CD4-positive, alpha-beta memory T cell (primary cell): ENCODE measurements at regions of chr3 and their contacts with region 1.

Region 1: GRCh38 chr3:120417272-120417911 is 33.4 kb downstream of the FSTL1 start:
- DNase-seq: peak; percentile 78 to 83 (median 80)
- H3K4me3 ChIP-seq: peak overlapping the region; percentile 43 to 59
- H3K4me3 Mint-ChIP-seq: peak overlapping the region; percentile 82 to 94 (median 87)
- H3K27ac ChIP-seq: no peak overlapping the region
- H3K27ac Mint-ChIP-seq: peak overlapping the region in 5 of 7 donors; percentile 23 to 86 (median 81)
- H3K4me1 ChIP-seq: peaks cover 10% of the 10 kb centered on the region
- H3K4me1 Mint-ChIP-seq: peaks cover 11 to 25% (median 12%) of the 10 kb centered on the region in 4 donors
- H3K27me3 ChIP-seq: no peaks in the 10 kb centered on the region
- H3K27me3 Mint-ChIP-seq: peaks cover 0 to 7% of the 10 kb centered on the region in 2 donors

Region 2: GRCh38 chr3:119891944-119892721 is 525.3 kb before region 1 on chr3:
- CTCF ChIA-PET with region 1: interaction called, 45 read pairs
- POLR2A ChIA-PET with region 1: no interaction called
- intact Hi-C with region 1: loop called (anchors 1 kb)
- DNase-seq: peak in 4 of 5 donors; percentile 55 to 62 (median 58)
- H3K4me3 ChIP-seq: no peak overlapping the region
- H3K4me3 Mint-ChIP-seq: no peak overlapping the region
- H3K27ac ChIP-seq: no peak overlapping the region
- H3K27ac Mint-ChIP-seq: peak overlapping the region in 2 of 7 donors; percentile 5 to 32
- H3K4me1 ChIP-seq: no peaks in the 10 kb centered on the region
- H3K4me1 Mint-ChIP-seq: peaks cover 11 to 17% (median 15%) of the 10 kb centered on the region in 4 donors
- H3K27me3 ChIP-seq: no peaks in the 10 kb centered on the region
- H3K27me3 Mint-ChIP-seq: no peaks in the 10 kb centered on the region

Region 3: GRCh38 chr3:120072867-120073525 is 344.4 kb before region 1 on chr3:
- CTCF ChIA-PET with region 1: no interaction called
- POLR2A ChIA-PET with region 1: no interaction called
- intact Hi-C with region 1: no loop called
- DNase-seq: no peak
- H3K4me3 ChIP-seq: no peak overlapping the region
- H3K4me3 Mint-ChIP-seq: no peak overlapping the region
- H3K27ac ChIP-seq: no peak overlapping the region
- H3K27ac Mint-ChIP-seq: peak overlapping the region in 1 of 7 donors; percentile 74
- H3K4me1 ChIP-seq: peaks cover 28% of the 10 kb centered on the region
- H3K4me1 Mint-ChIP-seq: peaks cover 45 to 78% (median 62%) of the 10 kb centered on the region in 4 donors
- H3K27me3 ChIP-seq: no peaks in the 10 kb centered on the region
- H3K27me3 Mint-ChIP-seq: no peaks in the 10 kb centered on the region

Region 4: DNA sequence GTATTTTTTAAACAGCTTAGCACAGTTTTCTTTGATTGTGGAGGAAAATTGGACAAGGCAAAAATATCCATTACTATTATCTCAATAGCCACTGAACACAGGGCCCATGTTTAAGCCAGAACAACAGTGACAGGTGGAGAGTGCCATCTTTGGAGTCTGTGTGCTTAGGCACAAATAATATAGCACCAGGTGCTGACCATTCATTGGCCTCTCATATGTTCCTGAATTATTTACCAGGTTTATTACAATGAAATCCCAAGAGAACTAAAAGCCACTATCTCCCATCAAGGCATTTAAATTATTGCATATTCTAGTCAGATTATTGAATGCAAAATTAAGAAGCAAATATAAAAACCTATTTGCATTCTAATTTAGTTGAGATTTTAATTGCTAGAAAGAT is 172.0 kb before region 1 on chr3:
- CTCF ChIA-PET with region 1: interaction called, 169 read pairs
- POLR2A ChIA-PET with region 1: interaction called, 4 read pairs
- intact Hi-C with region 1: loop called (anchors 1 kb)
- DNase-seq: no peak
- H3K4me3 ChIP-seq: no peak overlapping the region
- H3K4me3 Mint-ChIP-seq: no peak overlapping the region
- H3K27ac ChIP-seq: no peak overlapping the region
- H3K27ac Mint-ChIP-seq: no peak overlapping the region
- H3K4me1 ChIP-seq: no peaks in the 10 kb centered on the region
- H3K4me1 Mint-ChIP-seq: no peaks in the 10 kb centered on the region
- H3K27me3 ChIP-seq: peaks cover 4% of the 10 kb centered on the region
- H3K27me3 Mint-ChIP-seq: peaks cover 11 to 17% of the 10 kb centered on the region in 2 donors

Region 5: DNA sequence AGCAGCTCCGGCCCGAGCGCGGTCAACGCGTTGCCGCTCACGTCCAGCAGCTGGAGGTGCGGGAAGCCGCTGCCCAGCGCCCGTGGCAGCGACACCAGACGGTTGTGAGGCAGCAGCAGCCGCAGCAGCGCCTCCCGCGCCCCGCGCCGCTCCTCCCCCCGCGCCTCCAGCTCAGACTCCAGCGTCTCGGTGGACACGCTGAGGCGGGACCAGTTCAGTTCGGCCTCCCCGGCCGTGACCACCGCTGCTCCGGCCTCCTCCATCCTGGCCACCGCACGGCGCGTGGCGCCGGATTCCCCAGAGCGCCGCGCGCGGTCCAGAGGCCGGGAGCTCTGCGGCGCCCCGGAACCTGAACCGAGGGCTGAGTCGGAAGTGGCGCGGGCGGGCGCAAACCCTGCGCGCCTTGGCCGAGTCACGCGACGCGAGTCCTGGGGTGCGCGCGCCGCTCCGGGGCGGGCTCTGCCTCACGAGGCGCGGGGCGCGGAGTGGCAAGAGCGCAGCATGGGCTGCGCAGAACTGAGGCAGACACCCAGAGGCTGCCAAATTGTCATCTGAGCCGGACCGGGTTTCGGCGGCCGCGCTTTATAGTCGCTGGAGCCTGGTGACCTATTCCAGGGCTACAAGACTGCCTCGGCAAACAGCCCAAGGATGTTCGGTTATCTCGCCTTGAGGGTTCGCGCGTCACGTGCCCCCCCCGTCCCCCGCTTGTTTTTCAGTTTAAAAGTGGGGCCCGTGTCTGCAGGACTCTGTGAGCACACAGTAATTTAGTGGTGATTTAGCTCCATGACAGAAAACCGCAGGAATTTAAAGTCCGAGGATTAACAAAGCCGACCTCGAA is 68.2 kb before region 1 on chr3 and contains the start of gene LRRC58:
- CTCF ChIA-PET with region 1: interaction called, 21 read pairs
- POLR2A ChIA-PET with region 1: interaction called, 13 read pairs
- intact Hi-C with region 1: loop called (anchors 2 kb)
- DNase-seq: peak; percentile 86 to 93 (median 93)
- H3K4me3 ChIP-seq: peak within 1 kb of the TSS; percentile 67 to 91
- H3K4me3 Mint-ChIP-seq: peak within 1 kb of the TSS; percentile 88 to 95 (median 93)
- H3K27ac ChIP-seq: peak within 1 kb of the TSS; percentile 77
- H3K27ac Mint-ChIP-seq: peak within 1 kb of the TSS; percentile 87 to 96 (median 92)
- H3K4me1 ChIP-seq: peaks cover 46% of the 10 kb centered on the region
- H3K4me1 Mint-ChIP-seq: peaks cover 36 to 50% (median 43%) of the 10 kb centered on the region in 4 donors
- H3K27me3 ChIP-seq: no peaks in the 10 kb centered on the region
- H3K27me3 Mint-ChIP-seq: peaks cover 2% of the 10 kb centered on the region in 2 donors
- total RNA-seq, gene LRRC58: 23.0 to 23.6 TPM

Region 6: GRCh38 chr3:120393243-120393642 is 24.1 kb before region 1 on chr3:
- CTCF ChIA-PET with region 1: interaction called, 10 read pairs
- POLR2A ChIA-PET with region 1: no interaction called
- intact Hi-C with region 1: no loop called
- DNase-seq: no peak
- H3K4me3 ChIP-seq: no peak overlapping the region
- H3K4me3 Mint-ChIP-seq: no peak overlapping the region
- H3K27ac ChIP-seq: no peak overlapping the region
- H3K27ac Mint-ChIP-seq: no peak overlapping the region
- H3K4me1 ChIP-seq: no peaks in the 10 kb centered on the region
- H3K4me1 Mint-ChIP-seq: no peaks in the 10 kb centered on the region
- H3K27me3 ChIP-seq: no peaks in the 10 kb centered on the region
- H3K27me3 Mint-ChIP-seq: peaks cover 1 to 2% of the 10 kb centered on the region in 2 donors

Region 7: GRCh38 chr3:120742198-120742849 is 324.9 kb after region 1 on chr3 and contains the starts of genes GTF2E1 and RABL3:
- CTCF ChIA-PET with region 1: interaction called, 3 read pairs
- POLR2A ChIA-PET with region 1: no interaction called
- intact Hi-C with region 1: loop called (anchors 1 kb)
- DNase-seq: peak; percentile 96 to 99 (median 97)
- H3K4me3 ChIP-seq: peak within 1 kb of the TSS; percentile 83 to 92
- H3K4me3 Mint-ChIP-seq: peak within 1 kb of the TSS; percentile 89 to 98 (median 96)
- H3K27ac ChIP-seq: peak within 1 kb of the TSS; percentile 98
- H3K27ac Mint-ChIP-seq: peak within 1 kb of the TSS; percentile 96 to 99 (median 98)
- H3K4me1 ChIP-seq: peaks cover 34% of the 10 kb centered on the region
- H3K4me1 Mint-ChIP-seq: peaks cover 21 to 58% (median 39%) of the 10 kb centered on the region in 4 donors
- H3K27me3 ChIP-seq: no peaks in the 10 kb centered on the region
- H3K27me3 Mint-ChIP-seq: no peaks in the 10 kb centered on the region
- total RNA-seq, gene GTF2E1: 30.0 to 30.2 TPM
- total RNA-seq, gene RABL3: 31.9 to 33.0 TPM